Panc1 (cell line): ENCODE measurements at regions of chrX and their contacts with region 1.

Region 1: GRCh38 chrX:155086202-155086840 is 15.0 kb downstream of the BRCC3 start:
- DNase-seq: no peak
- ATAC-seq: peak; percentile 86
- H3K4me3 ChIP-seq: no peak overlapping the region
- H3K27ac ChIP-seq: no peak overlapping the region
- H3K4me1 ChIP-seq: no peaks in the 10 kb centered on the region
- H3K27me3 ChIP-seq: no peaks in the 10 kb centered on the region
- CTCF ChIP-seq: peak; percentile 85

Region 2: GRCh38 chrX:155216179-155216939 is 130.0 kb after region 1 on chrX and contains the start of gene VBP1:
- CTCF ChIA-PET with region 1: no interaction called
- POLR2A ChIA-PET with region 1: interaction called, 10 read pairs
- in situ Hi-C with region 1: no loop called
- intact Hi-C with region 1: loop called (anchors 10 kb)
- DNase-seq: peak; percentile 88
- ATAC-seq: peak; percentile 99
- H3K4me3 ChIP-seq: peak within 1 kb of the TSS; percentile 94 to 100
- H3K27ac ChIP-seq: peak within 1 kb of the TSS; percentile 83
- H3K4me1 ChIP-seq: peaks cover 21% of the 10 kb centered on the region
- H3K27me3 ChIP-seq: no peaks in the 10 kb centered on the region
- CTCF ChIP-seq: peak; percentile 74
- total RNA-seq, gene VBP1: 126 TPM